CD14-positive monocyte (primary cell): ENCODE measurements at regions of chr16 and their contacts with region 1.

Region 1: GRCh38 chr16:3059000-3059722 is 6.3 kb upstream of the IL32 start:
- DNase-seq: peak; percentile 74 to 80 (median 76)
- H3K4me3 ChIP-seq: peak overlapping the region; percentile 69 to 88 (median 71)
- H3K4me3 Mint-ChIP-seq: peak overlapping the region; percentile 82 to 89
- H3K27ac ChIP-seq: peak overlapping the region in 1 of 2 donors; percentile 72
- H3K27ac Mint-ChIP-seq: peak overlapping the region in 5 of 7 donors; percentile 35 to 77 (median 73)
- H3K4me1 ChIP-seq: peaks cover 61 to 73% of the 10 kb centered on the region in 2 donors
- H3K4me1 Mint-ChIP-seq: peaks cover 53% of the 10 kb centered on the region
- H3K27me3 ChIP-seq: no peaks in the 10 kb centered on the region
- H3K27me3 Mint-ChIP-seq: peaks cover 0 to 3% (median 3%) of the 10 kb centered on the region in 3 donors
- CTCF ChIP-seq: peak; percentile 95

Region 2: GRCh38 chr16:3129137-3130131 is 70.3 kb after region 1 on chr16:
- intact Hi-C with region 1: loop called (anchors 2 to 5 kb)
- DNase-seq: peak; percentile 82 to 87 (median 83)
- H3K4me3 ChIP-seq: peak overlapping the region; percentile 56 to 89 (median 65)
- H3K4me3 Mint-ChIP-seq: peak overlapping the region; percentile 85 to 93
- H3K27ac ChIP-seq: peak overlapping the region; percentile 37 to 66
- H3K27ac Mint-ChIP-seq: peak overlapping the region in 6 of 7 donors; percentile 68 to 88 (median 78)
- H3K4me1 ChIP-seq: peaks cover 31 to 43% of the 10 kb centered on the region in 2 donors
- H3K4me1 Mint-ChIP-seq: peaks cover 40% of the 10 kb centered on the region
- H3K27me3 ChIP-seq: no peaks in the 10 kb centered on the region
- H3K27me3 Mint-ChIP-seq: peaks cover 0 to 2% (median 0%) of the 10 kb centered on the region in 3 donors
- CTCF ChIP-seq: peak; percentile 95

Region 3: GRCh38 chr16:3161136-3162018 is 102.2 kb after region 1 on chr16:
- intact Hi-C with region 1: loop called in 1 of 2 experiments (anchors 5 kb)
- DNase-seq: no peak
- H3K4me3 ChIP-seq: no peak overlapping the region
- H3K4me3 Mint-ChIP-seq: peak overlapping the region in 1 of 2 donors; percentile 79
- H3K27ac ChIP-seq: no peak overlapping the region
- H3K27ac Mint-ChIP-seq: no peak overlapping the region
- H3K4me1 ChIP-seq: peaks cover 30 to 36% of the 10 kb centered on the region in 2 donors
- H3K4me1 Mint-ChIP-seq: peaks cover 41% of the 10 kb centered on the region
- H3K27me3 ChIP-seq: peaks cover 5 to 50% of the 10 kb centered on the region in 2 donors
- H3K27me3 Mint-ChIP-seq: peaks cover 70 to 92% (median 73%) of the 10 kb centered on the region in 3 donors
- CTCF ChIP-seq: no peak

Region 4: DNA sequence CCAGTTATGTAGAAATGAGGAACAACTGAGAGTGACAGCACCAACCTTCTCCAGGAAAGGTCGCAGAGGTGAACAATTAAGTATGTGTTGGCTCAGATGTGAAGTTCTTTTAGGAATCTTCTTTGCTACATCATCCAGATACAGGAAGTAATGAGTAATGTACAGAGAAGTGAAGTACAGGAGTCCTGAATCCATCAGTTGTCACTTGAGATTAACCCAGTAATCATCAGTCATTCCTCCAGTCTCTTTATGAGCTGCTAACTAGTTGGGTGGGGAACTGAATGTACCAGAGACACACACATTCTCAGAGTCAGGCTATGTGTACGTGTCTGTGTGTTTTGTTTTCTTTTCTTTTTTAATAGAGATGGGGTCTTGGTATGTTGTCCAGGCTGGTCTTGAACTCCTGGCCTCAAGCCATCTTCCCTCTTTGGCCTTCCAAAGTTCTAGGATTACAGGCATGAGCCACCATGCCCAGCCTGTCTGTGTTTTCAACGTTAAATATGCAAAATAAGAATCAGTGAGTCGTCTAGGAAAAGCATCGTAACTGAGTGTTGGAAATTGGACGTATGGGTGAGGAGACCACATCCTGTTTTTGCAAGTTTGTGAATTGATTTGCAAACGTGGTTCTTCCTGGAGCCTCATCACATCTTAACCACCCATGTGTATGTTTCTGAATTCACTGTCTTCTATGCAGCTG is 155.9 kb after region 1 on chr16:
- intact Hi-C with region 1: no loop called
- DNase-seq: peak; percentile 18 to 65 (median 47)
- H3K4me3 ChIP-seq: no peak overlapping the region
- H3K4me3 Mint-ChIP-seq: no peak overlapping the region
- H3K27ac ChIP-seq: no peak overlapping the region
- H3K27ac Mint-ChIP-seq: peak overlapping the region in 4 of 7 donors; percentile 4 to 60 (median 23)
- H3K4me1 ChIP-seq: peaks cover 17 to 23% of the 10 kb centered on the region in 2 donors
- H3K4me1 Mint-ChIP-seq: peaks cover 24% of the 10 kb centered on the region
- H3K27me3 ChIP-seq: peaks cover 0 to 3% of the 10 kb centered on the region in 2 donors
- H3K27me3 Mint-ChIP-seq: peaks cover 20 to 34% (median 21%) of the 10 kb centered on the region in 3 donors
- CTCF ChIP-seq: no peak